Head of caudate nucleus (tissue), 42 donors: ENCODE measurements at regions of chr19 and their contacts with region 1.

Region 1: DNA sequence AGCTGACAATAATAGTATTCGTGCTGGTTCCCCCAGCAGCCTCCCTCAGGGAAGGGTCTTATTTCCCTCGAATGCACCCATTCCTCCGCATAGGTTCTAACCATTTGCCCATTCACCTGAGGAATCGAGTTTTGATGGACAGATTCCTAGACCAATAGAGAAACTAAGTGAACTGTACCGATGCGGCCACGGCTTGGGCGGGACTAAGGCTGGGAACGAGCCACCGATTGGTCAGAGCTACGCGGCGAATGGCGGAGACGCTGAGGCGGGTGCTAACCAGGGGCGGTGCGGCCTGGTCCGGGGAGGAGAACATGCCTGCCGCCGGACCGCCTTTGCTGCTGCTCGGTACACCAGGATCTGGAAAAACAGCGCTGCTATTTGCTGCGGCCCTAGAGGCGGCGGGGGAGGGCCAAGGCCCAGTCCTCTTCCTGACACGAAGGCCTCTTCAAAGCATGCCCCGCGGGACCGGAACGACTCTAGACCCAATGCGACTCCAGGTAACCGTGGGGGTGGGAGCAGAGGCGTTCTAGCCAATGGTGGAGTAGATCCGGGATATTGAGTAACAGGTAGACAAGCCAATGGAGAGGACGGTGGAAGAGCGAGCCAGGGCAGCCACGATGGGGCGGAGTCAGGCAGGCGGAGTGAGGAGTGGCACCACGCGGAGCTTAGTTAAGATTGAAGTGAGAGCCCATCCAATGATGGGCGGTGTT is at the start of gene SWSAP1:
- DNase-seq: peak; percentile 95 to 100 (median 99)

Region 2: DNA sequence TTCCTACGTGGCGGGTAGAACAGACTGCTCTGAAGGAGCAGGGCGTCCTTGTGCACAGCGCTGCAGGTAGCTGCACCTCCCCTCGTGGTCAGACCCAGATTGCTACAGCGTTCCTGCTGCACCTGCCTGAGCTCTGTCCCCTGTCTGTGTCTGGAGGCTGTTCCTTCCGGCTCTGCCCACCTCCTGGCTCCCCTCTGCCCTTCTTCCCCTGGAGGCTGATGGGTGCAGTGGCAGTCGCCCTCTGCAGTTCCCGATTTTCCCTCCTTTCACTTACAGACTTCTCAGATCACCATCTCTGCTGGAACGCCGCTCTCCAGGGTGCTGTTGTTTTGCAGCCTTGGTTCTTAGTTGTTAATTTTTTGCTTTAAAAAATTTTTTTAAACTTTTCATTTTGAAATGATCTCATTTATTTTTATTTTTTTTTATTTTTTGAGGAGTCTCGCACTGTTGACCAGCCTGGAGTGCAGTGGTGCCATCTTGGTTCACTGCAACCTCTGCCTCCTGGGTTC is 360.1 kb before region 1 on chr19:
- intact Hi-C with region 1: no loop called
- DNase-seq: no peak

Region 3: DNA sequence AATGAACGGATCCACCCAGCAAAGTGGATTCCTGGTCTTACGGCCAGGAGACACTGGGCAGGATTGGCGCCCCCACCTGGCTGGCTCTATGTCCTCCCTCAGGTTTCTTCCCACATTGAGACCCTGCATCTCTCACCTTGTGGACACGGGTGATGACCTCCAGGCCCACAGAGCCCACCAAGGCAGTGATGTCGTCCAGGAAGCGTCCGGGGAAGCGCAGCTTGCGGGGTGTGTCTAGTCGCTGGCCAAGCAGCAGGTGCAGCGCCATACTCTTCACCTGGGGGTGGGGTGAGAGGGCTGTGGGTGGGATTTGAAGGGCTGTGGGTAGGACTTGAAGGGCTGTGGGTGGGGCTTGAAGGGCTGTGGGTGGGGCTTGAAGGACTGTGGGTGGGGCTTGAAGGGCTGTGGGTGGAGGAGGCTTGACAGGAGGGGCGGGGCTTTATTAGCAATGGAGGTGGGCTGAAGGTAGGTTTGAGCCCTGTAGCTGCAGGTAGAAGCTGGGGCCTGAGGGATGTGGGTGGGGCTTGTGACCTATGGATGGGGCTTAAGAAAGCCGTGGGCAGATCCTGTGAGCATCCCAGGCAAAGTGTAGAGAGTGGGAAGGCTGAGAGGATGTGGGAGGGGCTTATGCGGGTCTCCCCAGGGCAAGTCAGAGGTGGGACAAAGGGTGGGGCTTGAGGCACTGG is 147.2 kb before region 1 on chr19:
- intact Hi-C with region 1: no loop called
- DNase-seq: no peak

Region 4: DNA sequence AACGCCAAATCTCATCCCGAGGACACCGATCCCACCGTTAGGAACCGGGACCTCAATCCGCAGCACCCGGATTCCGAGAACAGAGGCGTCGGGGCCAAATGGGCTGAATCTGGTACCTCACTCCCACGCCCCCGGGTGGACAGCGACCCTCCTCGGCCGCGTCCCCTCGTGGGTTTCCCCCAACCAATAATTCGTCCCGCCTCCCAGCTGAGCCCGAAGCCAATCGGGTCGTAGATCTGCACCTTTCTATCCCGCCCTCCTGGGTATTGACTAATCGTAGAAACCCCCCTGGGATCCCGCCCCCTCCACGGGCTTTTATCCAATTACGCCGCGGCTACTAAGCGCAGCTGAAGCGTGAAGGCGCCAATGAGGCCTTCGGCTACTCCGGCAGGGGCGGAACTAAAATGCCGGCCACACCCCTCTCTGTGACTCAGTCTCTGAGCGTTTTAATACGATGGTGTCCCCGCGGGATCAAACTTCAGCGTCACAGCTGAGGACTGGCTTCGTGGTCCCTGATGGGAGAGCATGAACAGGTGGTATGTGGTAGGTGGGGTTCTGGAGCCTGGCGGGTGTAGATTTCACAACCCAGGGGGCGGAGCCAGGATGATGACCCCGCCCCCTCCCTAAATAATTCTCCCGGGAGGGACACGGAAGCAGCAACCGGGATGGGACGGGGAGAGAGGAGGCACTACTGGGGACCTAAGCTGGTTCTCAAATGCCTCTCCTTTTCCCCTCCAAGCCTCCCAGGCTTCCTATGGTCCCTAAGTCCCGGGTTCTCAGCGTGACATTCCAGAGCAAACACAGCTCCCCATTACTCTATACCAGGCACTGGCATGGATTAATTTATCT is 28.3 kb before region 1 on chr19 and contains the starts of genes CCDC159 and TMEM205:
- intact Hi-C with region 1: loop called (anchors 2 kb)
- DNase-seq: peak; percentile 97 to 100 (median 99)

Region 5: GRCh38 chr19:11435058-11435832 is 60.7 kb after region 1 on chr19 and contains the starts of genes ODAD3 and PRKCSH:
- intact Hi-C with region 1: loop called (anchors 5 kb)
- DNase-seq: peak; percentile 99 to 100 (median 100)

Region 6: DNA sequence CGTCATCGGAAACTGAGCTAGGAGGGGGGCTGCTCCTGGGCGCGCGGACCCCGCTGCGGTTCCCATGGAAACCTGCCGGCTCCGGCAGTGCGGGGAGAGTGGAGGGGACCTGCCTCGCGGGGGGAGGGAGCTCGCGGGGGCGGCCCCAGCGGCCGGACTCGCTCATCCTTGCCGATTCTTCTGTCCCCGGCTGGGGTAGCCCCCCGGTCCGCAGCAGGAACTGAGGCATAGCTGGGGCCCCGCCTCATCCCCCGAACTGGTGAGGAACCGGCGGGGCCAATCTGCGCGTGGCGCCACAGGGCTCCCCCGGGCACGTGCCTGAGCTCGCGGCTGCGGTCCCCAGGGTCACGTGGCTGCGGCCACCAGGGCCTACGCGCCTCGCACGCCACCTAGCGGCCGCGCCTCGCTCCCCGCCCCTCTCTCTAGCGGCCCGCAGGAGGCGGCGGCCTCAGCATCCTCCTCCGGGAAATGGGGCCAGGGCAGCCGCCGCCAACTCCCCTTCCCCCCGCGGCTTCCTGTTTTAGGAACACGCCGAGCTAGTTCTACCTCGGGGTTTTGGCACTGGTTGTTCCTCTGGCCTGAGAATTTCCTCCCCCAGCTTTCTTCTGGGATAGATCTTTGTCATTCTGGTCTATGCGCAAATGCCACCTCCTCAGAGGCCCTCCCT is 107.9 kb after region 1 on chr19:
- intact Hi-C with region 1: loop called (anchors 5 kb)
- DNase-seq: peak; percentile 75 to 96 (median 91)